Activated T-helper 1 cell treated with anti-CD3 and anti-CD28 coated beads, Interleukin-12 subunit alpha, Interleukin-12 subunit beta, Interleukin-2, Interleukin-4 antibody, amounts not matched to agents 30 ng/mL and 10 ng/mL and 1 ng/mL, durations not matched to agents 14 hours and 24 hours and 36 hours (primary cell): ENCODE measurements at regions of chr18 and their contacts with region 1.

Region 1: DNA sequence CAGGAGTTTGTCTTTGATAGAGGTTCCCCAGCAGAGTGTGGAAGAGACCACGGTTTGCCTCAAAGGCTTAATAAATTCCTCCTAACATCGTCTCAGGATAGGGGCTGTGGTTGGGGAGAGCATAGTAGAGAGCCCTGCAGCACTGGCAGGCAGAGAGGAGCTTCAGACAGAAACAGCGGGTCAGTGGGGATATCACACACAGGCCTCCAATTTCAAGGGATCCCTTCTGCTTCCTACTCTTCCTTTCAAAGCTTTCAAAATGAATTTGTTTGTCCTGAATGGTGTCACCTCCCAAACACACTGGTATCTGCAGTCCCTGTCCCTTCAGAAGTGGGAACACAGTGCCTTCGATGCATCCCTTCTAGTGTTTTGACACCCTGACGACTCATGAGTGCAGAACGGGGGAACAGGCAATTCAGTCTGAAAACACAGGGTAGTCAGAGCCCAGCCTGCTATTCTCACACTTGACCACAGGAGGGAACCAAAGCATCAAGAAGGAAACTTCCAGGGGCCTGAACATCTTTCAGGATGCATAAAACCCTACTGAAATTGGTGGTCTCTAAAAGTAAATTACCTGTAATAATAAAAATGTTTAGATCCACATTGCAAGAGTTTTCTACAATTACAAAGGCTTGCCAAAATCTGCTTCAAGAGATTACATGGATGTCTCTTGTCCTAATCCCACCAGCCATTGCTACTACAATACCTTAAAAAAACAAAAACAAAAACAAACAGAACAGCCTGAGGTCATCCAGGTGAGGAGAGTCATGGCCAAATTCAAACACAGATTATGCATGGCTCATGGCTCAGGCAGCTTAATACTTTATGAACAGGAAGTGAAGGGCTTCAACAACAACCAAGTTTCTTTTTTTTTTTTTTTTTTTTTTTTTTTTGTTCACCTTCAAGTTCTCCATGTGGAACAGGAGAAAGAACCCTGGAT is 49.8 kb downstream of the SLC14A2 start:
- DNase-seq: peak; percentile 44
- H3K4me3 Mint-ChIP-seq: no peak overlapping the region
- H3K27ac Mint-ChIP-seq: no peak overlapping the region
- H3K4me1 Mint-ChIP-seq: peaks cover 52% of the 10 kb centered on the region
- H3K27me3 Mint-ChIP-seq: peaks cover 12% of the 10 kb centered on the region

Region 2: DNA sequence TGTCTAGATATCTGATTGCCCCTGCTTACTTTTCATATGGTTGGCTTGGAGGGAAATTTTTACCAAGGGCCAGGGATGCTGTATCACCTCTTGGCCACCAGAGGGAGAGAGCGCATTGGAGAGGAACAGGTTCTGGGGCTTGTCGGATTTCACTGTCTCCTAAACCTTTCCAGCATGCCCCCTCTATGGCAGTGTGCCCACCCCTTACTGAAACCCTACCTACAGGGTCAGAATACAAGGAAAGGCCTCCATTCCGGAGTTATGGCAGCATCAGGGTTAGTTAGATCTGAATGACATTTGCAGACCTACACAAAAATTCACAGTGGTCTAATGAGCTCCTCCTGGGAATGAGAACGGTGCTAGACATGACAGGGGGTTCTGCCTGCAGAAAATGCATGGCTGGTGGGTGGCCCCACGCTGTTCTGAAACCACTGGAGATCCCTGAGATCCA is 44.0 kb before region 1 on chr18:
- intact Hi-C with region 1: loop called (anchors 1 kb)
- DNase-seq: peak; percentile 9
- H3K4me3 Mint-ChIP-seq: no peak overlapping the region
- H3K27ac Mint-ChIP-seq: no peak overlapping the region
- H3K4me1 Mint-ChIP-seq: no peaks in the 10 kb centered on the region
- H3K27me3 Mint-ChIP-seq: peaks cover 15% of the 10 kb centered on the region

Region 3: GRCh38 chr18:45874491-45875184 is 209.5 kb after region 1 on chr18:
- intact Hi-C with region 1: loop called (anchors 1 kb)
- DNase-seq: peak; percentile 67
- H3K4me3 Mint-ChIP-seq: peak overlapping the region; percentile 11
- H3K27ac Mint-ChIP-seq: peak overlapping the region; percentile 90
- H3K4me1 Mint-ChIP-seq: peaks cover 32% of the 10 kb centered on the region
- H3K27me3 Mint-ChIP-seq: peaks cover 2% of the 10 kb centered on the region

Region 4: DNA sequence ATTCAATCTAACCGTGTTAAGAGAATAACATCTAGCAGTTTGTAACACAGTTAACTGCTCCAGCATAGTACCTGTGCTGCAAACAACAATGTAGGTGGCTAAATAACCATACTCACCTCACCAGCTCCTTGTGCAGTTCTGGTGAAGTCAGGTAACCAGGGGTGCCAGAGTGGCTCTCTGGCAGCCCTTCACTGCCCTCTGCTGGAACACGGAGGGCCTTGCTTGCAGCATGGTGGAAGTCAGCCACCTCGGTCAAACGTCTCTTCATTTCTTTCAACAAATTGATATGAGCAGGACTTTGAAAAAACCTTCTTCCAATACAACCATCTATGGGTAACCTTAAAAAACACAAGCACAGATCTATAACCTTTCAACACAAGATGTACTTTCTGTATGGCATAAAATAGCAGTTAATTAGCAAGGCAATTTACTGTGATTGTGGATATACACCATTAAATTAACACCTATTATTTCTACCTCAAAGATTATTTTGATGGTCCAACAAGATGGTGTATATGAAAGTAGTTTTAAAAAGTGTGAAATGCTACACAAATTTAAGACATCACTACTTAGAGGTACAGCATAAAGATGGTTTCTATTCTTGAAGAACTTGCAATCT is 245.4 kb after region 1 on chr18:
- intact Hi-C with region 1: loop called (anchors 1 kb)
- DNase-seq: peak; percentile 25
- H3K4me3 Mint-ChIP-seq: no peak overlapping the region
- H3K27ac Mint-ChIP-seq: no peak overlapping the region
- H3K4me1 Mint-ChIP-seq: no peaks in the 10 kb centered on the region
- H3K27me3 Mint-ChIP-seq: no peaks in the 10 kb centered on the region

Region 5: DNA sequence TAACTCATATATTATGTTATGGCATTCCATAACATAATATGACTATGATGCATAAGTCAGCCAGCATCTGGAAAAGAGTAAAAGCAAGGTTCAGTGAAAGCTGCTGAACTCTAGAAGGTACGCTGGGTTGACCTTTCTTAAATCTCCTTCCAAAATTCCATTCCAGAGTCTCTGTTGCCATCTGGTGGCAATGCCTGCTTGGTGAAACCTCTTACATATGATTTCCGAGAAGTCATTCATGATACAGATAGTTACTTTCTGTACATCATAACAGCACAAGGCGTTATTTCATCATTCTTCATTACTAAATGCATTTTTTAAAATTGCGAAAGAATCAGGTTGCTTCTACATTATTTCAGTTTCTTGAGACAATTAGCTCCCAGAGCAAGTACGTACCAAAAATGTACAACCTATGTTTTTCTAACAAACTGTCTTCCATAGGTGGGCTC is 309.0 kb after region 1 on chr18:
- intact Hi-C with region 1: loop called (anchors 1 kb)
- DNase-seq: peak; percentile 51
- H3K4me3 Mint-ChIP-seq: no peak overlapping the region
- H3K27ac Mint-ChIP-seq: no peak overlapping the region
- H3K4me1 Mint-ChIP-seq: peaks cover 7% of the 10 kb centered on the region
- H3K27me3 Mint-ChIP-seq: peaks cover 4% of the 10 kb centered on the region